ENCODE measurements at regions of chr9 and their contacts with region 1.

Region 1: GRCh38 chr9:5301544-5301943 is 3.0 kb downstream of the RLN2 start:
- DNase-seq: no peak
- ATAC-seq: no peak
- H3K4me3 ChIP-seq: no peak overlapping the region
- H3K27ac ChIP-seq: no peak overlapping the region
- H3K4me1 ChIP-seq: no peaks in the 10 kb centered on the region; a peak in 1 of 5 replicates
- H3K27me3 ChIP-seq: no peaks in the 10 kb centered on the region
- CTCF ChIP-seq: no peak
- EP300 ChIP-seq: no peak
- POLR2A ChIP-seq: no peak
- RAD21 ChIP-seq: no peak

Region 2: DNA sequence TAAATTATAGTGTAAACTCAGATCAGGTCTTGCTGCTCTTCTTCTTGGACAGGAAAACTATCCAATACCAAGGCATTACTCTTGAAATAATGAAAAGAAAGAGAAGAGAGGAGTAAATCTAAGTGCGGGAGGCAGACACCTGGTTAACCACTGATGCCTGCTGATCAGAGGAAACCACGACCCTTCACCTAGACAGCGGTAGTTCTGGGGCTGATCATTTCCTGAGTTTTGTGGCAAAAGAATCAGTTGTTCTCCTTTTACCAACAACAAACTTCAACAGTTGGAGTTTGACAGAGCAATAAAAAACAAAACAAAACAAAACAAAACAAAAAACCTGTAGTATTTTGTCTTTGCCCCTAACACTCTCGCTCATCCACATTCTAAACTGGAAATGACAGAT is 35.1 kb after region 1 on chr9:
- CTCF ChIA-PET with region 1: no interaction called
- POLR2A ChIA-PET with region 1: no interaction called
- in situ Hi-C with region 1: loop called (anchors 5 kb)
- intact Hi-C with region 1: no loop called
- DNase-seq: no peak
- ATAC-seq: no peak
- H3K4me3 ChIP-seq: no peak overlapping the region
- H3K27ac ChIP-seq: no peak overlapping the region
- H3K4me1 ChIP-seq: no peaks in the 10 kb centered on the region
- H3K27me3 ChIP-seq: no peaks in the 10 kb centered on the region
- CTCF ChIP-seq: no peak
- EP300 ChIP-seq: no peak
- POLR2A ChIP-seq: no peak
- RAD21 ChIP-seq: no peak

Region 3: DNA sequence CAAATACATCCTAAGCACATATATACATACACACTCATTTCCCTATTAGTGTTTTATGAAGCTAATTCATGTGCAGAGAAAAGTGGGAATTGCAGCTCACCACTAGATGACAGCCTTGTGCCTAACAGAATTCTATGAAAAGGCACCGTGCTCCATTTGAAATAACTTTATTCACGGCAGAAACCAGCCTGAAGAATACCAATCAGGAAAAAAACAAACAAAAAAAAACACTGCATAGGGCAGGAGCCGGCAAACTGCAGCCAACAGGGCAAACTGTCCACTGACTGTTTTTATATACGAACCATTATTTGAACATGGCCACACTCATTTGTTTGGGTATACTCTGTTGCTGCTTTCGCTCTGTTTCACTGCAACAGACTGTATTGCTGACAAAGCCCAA is 497.8 kb after region 1 on chr9:
- CTCF ChIA-PET with region 1: no interaction called
- POLR2A ChIA-PET with region 1: no interaction called
- in situ Hi-C with region 1: no loop called
- intact Hi-C with region 1: no loop called
- DNase-seq: peak in 2 of 4 experiments; percentile 11 to 43
- ATAC-seq: peak; percentile 76
- H3K4me3 ChIP-seq: no peak overlapping the region
- H3K27ac ChIP-seq: no peak overlapping the region
- H3K4me1 ChIP-seq: no peaks in the 10 kb centered on the region
- H3K27me3 ChIP-seq: no peaks in the 10 kb centered on the region
- CTCF ChIP-seq: peak; percentile 51 to 86 (median 66)
- EP300 ChIP-seq: no peak
- POLR2A ChIP-seq: no peak
- RAD21 ChIP-seq: peak; percentile 70 to 85